ENCODE measurements at regions of chr18 and their contacts with region 1.

Region 1: GRCh38 chr18:70428439-70428838 is 139.6 kb downstream of the SOCS6 start:
- DNase-seq: no peak
- ATAC-seq: no peak
- H3K4me3 ChIP-seq: no peak overlapping the region
- H3K27ac ChIP-seq: no peak overlapping the region
- H3K4me1 ChIP-seq: peaks cover 10% of the 10 kb centered on the region
- H3K27me3 ChIP-seq: no peaks in the 10 kb centered on the region
- CTCF ChIP-seq: no peak
- POLR2A ChIP-seq: no peak
- RAD21 ChIP-seq: no peak

Region 2: GRCh38 chr18:70195852-70196434 is 232.5 kb before region 1 on chr18:
- CTCF ChIA-PET with region 1: interaction called, 14 read pairs
- POLR2A ChIA-PET with region 1: no interaction called
- dilution Hi-C with region 1: loop called (anchors 25 kb)
- in situ Hi-C with region 1: loop called (anchors 5 kb)
- intact Hi-C with region 1: no loop called
- DNase-seq: peak; percentile 70
- ATAC-seq: peak; percentile 72
- H3K4me3 ChIP-seq: no peak overlapping the region
- H3K27ac ChIP-seq: no peak overlapping the region
- H3K4me1 ChIP-seq: no peaks in the 10 kb centered on the region
- H3K27me3 ChIP-seq: no peaks in the 10 kb centered on the region
- CTCF ChIP-seq: peak; percentile 82
- POLR2A ChIP-seq: no peak
- RAD21 ChIP-seq: peak; percentile 87

Region 3: GRCh38 chr18:70288851-70289328 is 139.5 kb before region 1 on chr18 and contains the start of gene SOCS6:
- CTCF ChIA-PET with region 1: no interaction called
- POLR2A ChIA-PET with region 1: no interaction called
- dilution Hi-C with region 1: no loop called
- in situ Hi-C with region 1: loop called (anchors 5 kb)
- intact Hi-C with region 1: no loop called
- DNase-seq: peak; percentile 66
- ATAC-seq: peak; percentile 83
- H3K4me3 ChIP-seq: peak within 1 kb of the TSS; percentile 53
- H3K27ac ChIP-seq: peak within 1 kb of the TSS; percentile 79
- H3K4me1 ChIP-seq: peaks cover 11% of the 10 kb centered on the region
- H3K27me3 ChIP-seq: no peaks in the 10 kb centered on the region
- CTCF ChIP-seq: no peak
- POLR2A ChIP-seq: peak; percentile 85
- RAD21 ChIP-seq: no peak
- total RNA-seq, gene SOCS6: 53.9 and 57.4 TPM in 2 replicates

Region 4: DNA sequence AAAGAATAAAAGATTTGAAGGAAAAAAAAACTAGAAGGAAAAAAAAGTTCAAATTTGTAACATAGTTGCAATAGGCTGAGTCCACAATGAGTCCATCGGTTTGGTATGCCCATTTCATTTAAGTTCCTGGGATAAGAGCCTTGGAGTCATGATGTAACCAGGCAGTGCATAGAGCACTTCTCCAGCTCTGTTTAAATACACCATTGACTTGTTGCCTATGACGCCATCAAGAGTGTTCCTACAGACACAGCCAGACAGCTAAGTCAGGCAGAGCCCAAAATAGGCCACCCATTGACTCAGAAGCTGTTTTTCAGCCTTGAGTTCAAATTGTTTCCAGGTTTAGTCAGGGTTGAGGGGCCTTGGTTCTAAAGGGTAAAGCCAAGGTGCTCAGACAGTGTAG is 94.7 kb before region 1 on chr18:
- CTCF ChIA-PET with region 1: no interaction called
- POLR2A ChIA-PET with region 1: no interaction called
- dilution Hi-C with region 1: no loop called
- in situ Hi-C with region 1: no loop called
- intact Hi-C with region 1: loop called (anchors 5 kb)
- DNase-seq: peak; percentile 100
- ATAC-seq: peak; percentile 90
- H3K4me3 ChIP-seq: no peak overlapping the region
- H3K27ac ChIP-seq: peak overlapping the region; percentile 88
- H3K4me1 ChIP-seq: peaks cover 6% of the 10 kb centered on the region; the same call in 1 of the 2 replicates
- H3K27me3 ChIP-seq: no peaks in the 10 kb centered on the region
- CTCF ChIP-seq: no peak
- POLR2A ChIP-seq: no peak
- RAD21 ChIP-seq: no peak; the same call in 1 of the 2 replicates

Region 5: GRCh38 chr18:70363861-70364260 is 64.6 kb before region 1 on chr18:
- CTCF ChIA-PET with region 1: no interaction called
- POLR2A ChIA-PET with region 1: no interaction called
- dilution Hi-C with region 1: no loop called
- in situ Hi-C with region 1: no loop called
- intact Hi-C with region 1: no loop called
- DNase-seq: peak; percentile 72
- ATAC-seq: no peak
- H3K4me3 ChIP-seq: no peak overlapping the region
- H3K27ac ChIP-seq: no peak overlapping the region
- H3K4me1 ChIP-seq: peaks cover 11% of the 10 kb centered on the region
- H3K27me3 ChIP-seq: no peaks in the 10 kb centered on the region
- CTCF ChIP-seq: no peak
- POLR2A ChIP-seq: no peak
- RAD21 ChIP-seq: no peak